ENCODE measurements at regions of chr6 and their contacts with region 1.

Region 1: GRCh38 chr6:27479319-27480182 is 6.6 kb upstream of the ZNF184 start:
- DNase-seq: peak; percentile 92 to 93
- ATAC-seq: peak; percentile 77 to 87 (median 82)
- H3K4me3 ChIP-seq: peak overlapping the region; percentile 92
- H3K4me3 Mint-ChIP-seq: no peak overlapping the region
- H3K27ac ChIP-seq: peak overlapping the region; percentile 99
- H3K27ac Mint-ChIP-seq: no peak overlapping the region
- H3K4me1 ChIP-seq: peaks cover 13% of the 10 kb centered on the region
- H3K4me1 Mint-ChIP-seq: peaks cover 0 to 4% of the 10 kb centered on the region in 2 donors
- H3K27me3 ChIP-seq: no peaks in the 10 kb centered on the region
- H3K27me3 Mint-ChIP-seq: no peaks in the 10 kb centered on the region
- CTCF ChIP-seq: no peak

Region 2: GRCh38 chr6:27146706-27147505 is 332.6 kb before region 1 on chr6:
- intact Hi-C with region 1: loop called (anchors 2 kb)
- DNase-seq: peak; percentile 74 to 97
- ATAC-seq: peak; percentile 76 to 88 (median 82)
- H3K4me3 ChIP-seq: peak overlapping the region; percentile 74
- H3K4me3 Mint-ChIP-seq: no peak overlapping the region
- H3K27ac ChIP-seq: peak overlapping the region; percentile 88
- H3K27ac Mint-ChIP-seq: no peak overlapping the region
- H3K4me1 ChIP-seq: peaks cover 23% of the 10 kb centered on the region
- H3K4me1 Mint-ChIP-seq: peaks cover 0 to 3% of the 10 kb centered on the region in 2 donors
- H3K27me3 ChIP-seq: no peaks in the 10 kb centered on the region
- H3K27me3 Mint-ChIP-seq: no peaks in the 10 kb centered on the region
- CTCF ChIP-seq: no peak

Region 3: DNA sequence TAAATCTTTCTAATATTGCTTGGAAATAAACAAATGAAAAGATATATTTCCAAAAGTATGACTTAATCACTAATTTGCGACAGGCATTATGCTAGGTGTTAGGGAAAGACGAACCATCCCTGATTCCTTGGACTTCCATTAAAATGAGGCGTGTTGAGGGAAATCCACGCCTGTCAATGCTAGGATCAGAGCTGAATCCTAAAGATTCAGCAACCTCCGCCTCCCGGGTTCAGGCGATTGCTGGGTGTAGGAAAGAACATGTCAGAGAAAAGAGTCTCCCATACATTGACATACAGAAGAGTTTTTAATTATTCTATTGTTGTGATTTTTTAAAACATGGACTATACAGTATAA is 248.8 kb before region 1 on chr6:
- intact Hi-C with region 1: no loop called
- DNase-seq: no peak
- ATAC-seq: no peak
- H3K4me3 ChIP-seq: no peak overlapping the region
- H3K4me3 Mint-ChIP-seq: no peak overlapping the region
- H3K27ac ChIP-seq: no peak overlapping the region
- H3K27ac Mint-ChIP-seq: no peak overlapping the region
- H3K4me1 ChIP-seq: no peaks in the 10 kb centered on the region
- H3K4me1 Mint-ChIP-seq: peaks cover 0 to 6% of the 10 kb centered on the region in 2 donors
- H3K27me3 ChIP-seq: peaks cover 47% of the 10 kb centered on the region
- H3K27me3 Mint-ChIP-seq: peaks cover 44 to 69% of the 10 kb centered on the region in 2 donors
- CTCF ChIP-seq: no peak

Region 4: GRCh38 chr6:27503436-27504030 is 24.0 kb after region 1 on chr6:
- intact Hi-C with region 1: loop called (anchors 1 kb)
- DNase-seq: peak; percentile 80 to 90
- ATAC-seq: peak; percentile 60 to 72 (median 67)
- H3K4me3 ChIP-seq: peak overlapping the region; percentile 71
- H3K4me3 Mint-ChIP-seq: peak overlapping the region; percentile 91
- H3K27ac ChIP-seq: peak overlapping the region; percentile 61
- H3K27ac Mint-ChIP-seq: peak overlapping the region; percentile 92 to 94
- H3K4me1 ChIP-seq: peaks cover 11% of the 10 kb centered on the region
- H3K4me1 Mint-ChIP-seq: peaks cover 22 to 33% of the 10 kb centered on the region in 2 donors
- H3K27me3 ChIP-seq: peaks cover 12% of the 10 kb centered on the region
- H3K27me3 Mint-ChIP-seq: peaks cover 17 to 22% of the 10 kb centered on the region in 2 donors
- CTCF ChIP-seq: no peak

Region 5: GRCh38 chr6:27753668-27754407 is 274.3 kb after region 1 on chr6:
- intact Hi-C with region 1: loop called (anchors 1 kb)
- DNase-seq: peak; percentile 19 to 75
- ATAC-seq: no peak
- H3K4me3 ChIP-seq: peak overlapping the region; percentile 81
- H3K4me3 Mint-ChIP-seq: peak overlapping the region; percentile 99
- H3K27ac ChIP-seq: no peak overlapping the region
- H3K27ac Mint-ChIP-seq: peak overlapping the region; percentile 95 to 100
- H3K4me1 ChIP-seq: peaks cover 15% of the 10 kb centered on the region
- H3K4me1 Mint-ChIP-seq: peaks cover 32 to 37% of the 10 kb centered on the region in 2 donors
- H3K27me3 ChIP-seq: no peaks in the 10 kb centered on the region
- H3K27me3 Mint-ChIP-seq: peaks cover 2 to 9% of the 10 kb centered on the region in 2 donors
- CTCF ChIP-seq: no peak

Region 6: DNA sequence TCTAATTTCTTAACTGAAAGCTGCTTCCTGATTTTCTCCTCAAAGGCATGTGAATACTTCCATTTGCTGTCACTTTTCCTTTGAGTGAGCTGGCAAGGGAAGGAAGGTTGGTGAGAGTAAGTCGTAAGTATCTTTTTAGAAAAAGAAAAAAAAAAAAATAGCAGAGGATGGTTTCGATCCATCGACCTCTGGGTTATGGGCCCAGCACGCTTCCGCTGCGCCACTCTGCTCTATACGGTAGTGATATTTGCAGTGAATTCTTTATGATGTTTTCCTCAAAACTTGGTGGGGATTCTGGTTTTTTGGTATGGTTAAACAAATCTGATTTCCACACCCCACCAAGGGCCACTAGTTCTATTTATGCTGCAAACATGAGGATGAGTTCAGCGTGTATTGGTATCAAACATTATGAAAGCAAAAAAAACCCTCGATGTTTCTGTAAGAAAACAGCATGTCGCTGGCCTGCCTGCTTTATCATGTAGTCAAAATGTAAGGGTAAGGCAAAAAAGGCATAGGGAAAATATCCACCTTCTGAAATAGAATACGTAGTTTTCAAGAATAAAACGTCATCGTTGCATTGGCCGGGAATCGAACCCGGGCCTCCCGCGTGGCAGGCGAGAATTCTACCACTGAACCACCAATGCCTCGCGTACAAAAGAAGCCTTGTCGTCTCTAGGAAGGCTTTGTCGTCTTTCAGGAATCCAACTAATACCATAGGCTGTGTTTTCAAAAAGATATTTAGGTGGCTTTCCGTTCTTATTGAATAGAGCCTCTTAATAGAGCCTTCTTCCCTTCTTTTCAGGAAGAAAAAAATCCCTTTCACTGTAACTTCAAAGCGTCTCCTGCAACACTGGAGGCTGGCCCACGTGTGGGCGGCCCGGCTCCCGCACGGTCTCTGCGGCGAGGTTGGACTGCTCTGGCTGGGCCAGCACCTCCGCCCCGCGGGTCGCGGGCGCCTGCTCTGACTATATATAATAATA is 423.1 kb after region 1 on chr6:
- intact Hi-C with region 1: loop called (anchors 2 kb)
- DNase-seq: peak; percentile 91 to 96
- ATAC-seq: peak; percentile 87 to 90 (median 87)
- H3K4me3 ChIP-seq: peak overlapping the region; percentile 64
- H3K4me3 Mint-ChIP-seq: peak overlapping the region; percentile 91
- H3K27ac ChIP-seq: peak overlapping the region; percentile 90
- H3K27ac Mint-ChIP-seq: peak overlapping the region; percentile 95 to 99
- H3K4me1 ChIP-seq: peaks cover 7% of the 10 kb centered on the region
- H3K4me1 Mint-ChIP-seq: peaks cover 10 to 17% of the 10 kb centered on the region in 2 donors
- H3K27me3 ChIP-seq: peaks cover 4% of the 10 kb centered on the region
- H3K27me3 Mint-ChIP-seq: peaks cover 6 to 12% of the 10 kb centered on the region in 2 donors
- CTCF ChIP-seq: no peak

Region 7: DNA sequence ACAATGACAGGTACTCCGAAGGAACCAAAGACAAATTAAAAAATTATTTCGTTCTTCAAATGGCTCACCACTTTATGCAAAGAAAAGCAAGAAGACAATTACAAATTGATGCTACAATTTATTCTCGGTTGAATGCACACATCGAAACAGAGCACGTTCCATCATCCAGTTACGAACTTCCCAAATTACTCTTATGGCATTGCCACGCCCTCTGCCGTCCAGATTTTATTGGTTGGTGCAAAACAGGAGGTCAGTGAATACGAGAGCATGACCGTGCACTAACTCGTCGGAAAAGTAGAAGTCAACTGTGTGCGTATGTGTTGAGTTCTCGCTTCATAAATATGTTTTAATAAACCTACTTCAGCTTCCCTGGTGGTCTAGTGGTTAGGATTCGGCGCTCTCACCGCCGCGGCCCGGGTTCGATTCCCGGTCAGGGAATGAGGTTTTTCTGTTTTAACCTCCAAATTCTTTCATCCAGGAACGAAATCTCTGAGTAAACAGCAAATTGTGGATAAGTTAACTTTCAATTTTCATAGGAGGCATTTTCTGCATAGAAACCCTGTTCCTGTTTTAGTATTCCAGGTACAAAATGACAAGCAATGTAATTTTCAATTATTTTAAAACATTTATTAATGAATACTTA is 1502.4 kb after region 1 on chr6:
- intact Hi-C with region 1: loop called (anchors 5 kb)
- DNase-seq: peak; percentile 68 to 89
- ATAC-seq: peak; percentile 72 to 86 (median 73)
- H3K4me3 ChIP-seq: peak overlapping the region; percentile 86
- H3K4me3 Mint-ChIP-seq: peak overlapping the region; percentile 97
- H3K27ac ChIP-seq: peak overlapping the region; percentile 28
- H3K27ac Mint-ChIP-seq: peak overlapping the region; percentile 95 to 99
- H3K4me1 ChIP-seq: peaks cover 19% of the 10 kb centered on the region
- H3K4me1 Mint-ChIP-seq: peaks cover 66 to 67% of the 10 kb centered on the region in 2 donors
- H3K27me3 ChIP-seq: peaks cover 24% of the 10 kb centered on the region
- H3K27me3 Mint-ChIP-seq: peaks cover 41 to 68% of the 10 kb centered on the region in 2 donors
- CTCF ChIP-seq: no peak